Activated T-helper 1 cell treated with anti-CD3 and anti-CD28 coated beads, Interleukin-12 subunit alpha, Interleukin-12 subunit beta, Interleukin-2, Interleukin-4 antibody, amounts not matched to agents 30 ng/mL and 10 ng/mL and 1 ng/mL, durations not matched to agents 14 hours and 24 hours and 36 hours (primary cell): ENCODE measurements at regions of chr7 and their contacts with region 1.

Region 1: GRCh38 chr7:15720849-15721471 is 34.5 kb upstream of the MEOX2 start:
- DNase-seq: no peak
- H3K4me3 Mint-ChIP-seq: no peak overlapping the region
- H3K27ac Mint-ChIP-seq: no peak overlapping the region
- H3K4me1 Mint-ChIP-seq: no peaks in the 10 kb centered on the region
- H3K27me3 Mint-ChIP-seq: no peaks in the 10 kb centered on the region

Region 2: DNA sequence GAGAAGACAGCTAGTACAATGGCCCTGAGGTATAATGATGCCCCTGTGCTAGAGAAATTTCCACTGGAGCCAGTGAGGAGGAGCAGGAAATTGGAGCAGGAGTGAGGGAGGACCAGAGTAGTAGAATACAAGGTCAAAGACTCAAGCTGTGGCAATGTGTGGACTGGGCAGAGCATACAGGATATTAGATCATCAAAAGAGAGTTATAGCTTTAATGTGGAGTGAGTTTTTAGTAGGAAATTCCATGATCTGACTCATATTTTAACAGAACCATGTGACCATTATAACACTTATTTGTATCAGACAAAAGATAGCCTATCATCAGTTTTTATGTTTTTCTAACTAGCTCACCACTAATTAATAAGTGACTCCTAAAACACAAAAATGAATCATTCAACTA is 972.5 kb before region 1 on chr7:
- intact Hi-C with region 1: no loop called
- DNase-seq: no peak
- H3K4me3 Mint-ChIP-seq: no peak overlapping the region
- H3K27ac Mint-ChIP-seq: no peak overlapping the region
- H3K4me1 Mint-ChIP-seq: no peaks in the 10 kb centered on the region
- H3K27me3 Mint-ChIP-seq: no peaks in the 10 kb centered on the region

Region 3: GRCh38 chr7:15305002-15305600 is 415.9 kb before region 1 on chr7:
- intact Hi-C with region 1: loop called (anchors 10 kb)
- DNase-seq: no peak
- H3K4me3 Mint-ChIP-seq: no peak overlapping the region
- H3K27ac Mint-ChIP-seq: no peak overlapping the region
- H3K4me1 Mint-ChIP-seq: no peaks in the 10 kb centered on the region
- H3K27me3 Mint-ChIP-seq: no peaks in the 10 kb centered on the region